ENCODE measurements at regions of chr14 and their contacts with region 1.

Region 1: DNA sequence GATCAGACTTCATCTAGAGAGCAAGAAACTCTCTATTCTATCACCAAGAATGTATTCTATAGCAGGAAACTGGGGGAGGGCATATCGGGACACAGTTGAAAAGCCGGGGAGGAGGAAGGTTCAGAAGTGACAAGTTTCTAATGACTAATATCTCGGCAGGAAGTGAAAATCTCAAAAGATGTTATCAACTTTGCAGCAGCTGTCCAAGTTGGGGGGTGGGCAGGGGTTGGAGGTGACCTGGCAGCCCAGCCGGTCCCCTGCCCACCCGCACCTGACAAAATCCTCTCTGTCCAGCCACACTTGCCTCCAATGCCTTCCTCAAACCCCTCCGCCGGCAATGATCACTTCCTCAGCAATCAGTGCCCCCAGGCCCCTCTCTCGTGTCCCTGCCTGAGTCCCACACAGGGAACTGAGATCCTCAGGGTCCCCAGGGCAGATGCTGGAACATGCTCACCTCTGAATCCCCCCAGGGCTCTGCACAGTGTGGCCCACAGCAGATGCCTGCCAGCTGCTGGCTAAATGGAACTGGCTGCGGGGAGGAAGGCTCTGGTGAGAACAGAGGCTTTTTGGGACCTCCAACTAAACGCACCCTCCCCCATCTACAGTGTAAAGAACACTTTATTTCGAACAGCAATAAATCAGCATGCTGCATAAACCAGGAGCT is 43.9 kb downstream of the CCDC88C start:
- DNase-seq: peak; percentile 69
- H3K4me3 Mint-ChIP-seq: peak overlapping the region; percentile 71
- H3K27ac Mint-ChIP-seq: peak overlapping the region; percentile 94
- H3K4me1 Mint-ChIP-seq: peaks cover 99% of the 10 kb centered on the region
- H3K27me3 Mint-ChIP-seq: no peaks in the 10 kb centered on the region

Region 2: DNA sequence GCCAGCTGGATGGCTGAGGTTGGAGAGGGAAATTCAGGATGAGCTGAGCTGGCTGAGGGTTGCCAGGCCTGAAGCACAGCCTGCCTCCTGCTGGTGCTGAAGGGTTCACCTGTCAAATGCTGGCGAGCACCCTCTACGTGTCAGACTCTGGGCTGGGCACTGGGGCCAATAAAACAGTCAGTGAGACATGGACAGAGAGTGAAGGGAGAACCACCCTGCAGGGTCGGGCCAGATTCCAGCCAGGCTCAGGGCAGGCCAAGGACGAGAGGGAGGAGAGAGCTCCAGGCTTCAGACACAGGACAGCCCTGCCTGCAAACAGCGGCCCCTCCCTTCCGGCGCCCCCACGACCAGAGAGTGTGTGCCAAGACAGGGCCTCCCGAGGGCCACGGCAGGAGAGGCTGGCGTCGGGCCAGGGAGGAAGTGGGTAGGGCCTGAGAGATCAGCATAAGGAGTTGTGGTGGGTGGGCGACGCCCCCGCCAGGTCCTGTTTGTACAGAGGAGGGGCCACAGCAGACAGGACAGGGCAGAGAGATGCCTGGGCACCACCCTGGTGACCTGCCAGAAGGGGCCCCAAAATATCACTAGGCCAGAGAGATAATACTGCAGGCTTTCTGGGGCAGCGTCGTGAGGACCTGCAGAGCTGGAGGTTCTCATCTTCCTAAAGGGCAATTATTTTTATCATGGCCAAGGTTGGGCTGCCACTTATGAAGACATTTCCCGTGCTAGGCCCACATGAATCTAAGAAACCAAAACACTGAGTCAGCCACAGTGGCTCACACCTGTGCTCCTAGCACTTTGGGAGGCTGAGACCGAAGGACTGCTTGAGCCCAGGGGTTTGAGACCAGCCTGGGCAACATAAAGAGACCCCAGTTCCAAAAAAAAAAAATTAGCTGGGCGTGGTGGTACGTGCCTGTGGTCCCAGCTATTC is 56.1 kb before region 1 on chr14:
- CTCF ChIA-PET with region 1: interaction called, 4 read pairs
- POLR2A ChIA-PET with region 1: interaction called, 17 read pairs
- DNase-seq: peak; percentile 86
- H3K4me3 Mint-ChIP-seq: peak overlapping the region; percentile 46
- H3K27ac Mint-ChIP-seq: peak overlapping the region; percentile 95
- H3K4me1 Mint-ChIP-seq: peaks cover 83% of the 10 kb centered on the region
- H3K27me3 Mint-ChIP-seq: no peaks in the 10 kb centered on the region

Region 3: DNA sequence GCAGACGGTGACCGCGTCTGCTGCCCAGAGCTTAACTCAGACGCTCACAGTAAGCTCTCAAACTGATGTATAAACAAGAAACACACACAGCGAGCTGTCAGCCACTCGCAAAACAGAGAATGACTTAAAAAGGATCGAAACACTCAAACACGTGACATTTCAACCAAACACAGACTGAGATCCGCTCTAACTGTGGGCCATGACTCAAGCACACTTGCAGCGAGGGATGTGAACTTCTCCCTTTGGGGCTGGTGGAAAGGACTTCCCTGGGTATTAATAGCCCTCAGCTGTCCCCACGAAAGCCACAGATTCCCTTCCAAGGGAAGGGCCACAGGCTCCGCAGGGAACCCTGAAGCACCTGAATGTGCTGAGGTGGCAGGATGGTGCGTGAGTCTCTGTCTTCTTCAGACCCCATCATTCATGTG is 14.8 kb after region 1 on chr14:
- CTCF ChIA-PET with region 1: interaction called, 3 read pairs
- POLR2A ChIA-PET with region 1: interaction called, 25 read pairs
- DNase-seq: peak; percentile 63
- H3K4me3 Mint-ChIP-seq: no peak overlapping the region
- H3K27ac Mint-ChIP-seq: peak overlapping the region; percentile 72
- H3K4me1 Mint-ChIP-seq: peaks cover 83% of the 10 kb centered on the region
- H3K27me3 Mint-ChIP-seq: no peaks in the 10 kb centered on the region

Region 4: DNA sequence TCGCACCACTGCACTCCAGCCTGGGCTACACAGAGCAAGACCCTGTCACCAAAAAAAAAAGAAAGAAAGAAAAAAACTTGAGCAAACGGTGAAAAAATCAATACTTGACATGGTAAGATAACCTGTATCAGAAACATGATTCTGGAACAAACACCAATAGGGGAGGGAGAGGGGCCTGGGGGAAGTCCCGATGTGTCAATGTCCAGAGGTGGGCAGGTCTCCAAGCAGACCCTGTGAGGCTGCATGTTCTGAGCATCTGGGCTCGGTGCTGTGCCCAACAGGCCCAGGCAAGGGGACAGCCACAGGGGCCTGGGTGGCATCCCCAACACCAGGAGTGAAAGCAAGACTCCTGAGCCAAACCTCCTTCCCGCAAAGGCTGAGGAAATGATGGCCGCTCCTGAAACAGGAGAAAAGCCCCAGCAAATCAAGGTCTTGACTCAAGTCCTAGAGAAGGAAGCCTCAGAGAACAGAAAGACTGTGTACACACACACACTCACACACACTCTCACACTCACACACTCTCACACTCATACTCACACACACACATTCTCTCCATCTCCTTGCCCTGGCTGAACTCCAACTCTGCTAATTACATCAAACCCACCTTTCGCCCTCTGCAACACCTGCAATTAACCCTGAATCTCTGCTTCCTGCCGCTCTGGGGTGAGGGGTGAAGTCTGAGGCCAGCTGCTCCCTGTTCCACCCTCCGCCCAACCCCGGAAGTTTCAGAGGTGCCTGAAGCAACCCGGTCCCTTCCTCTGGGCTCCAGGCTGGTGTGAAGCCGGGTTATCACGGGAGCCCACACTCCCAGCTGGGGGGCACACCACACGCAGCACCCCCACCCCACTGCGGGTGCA is 23.5 kb after region 1 on chr14:
- CTCF ChIA-PET with region 1: interaction called, 9 read pairs
- POLR2A ChIA-PET with region 1: interaction called, 77 read pairs
- DNase-seq: peak; percentile 81
- H3K4me3 Mint-ChIP-seq: peak overlapping the region; percentile 68
- H3K27ac Mint-ChIP-seq: peak overlapping the region; percentile 85
- H3K4me1 Mint-ChIP-seq: peaks cover 95% of the 10 kb centered on the region
- H3K27me3 Mint-ChIP-seq: no peaks in the 10 kb centered on the region

Measured in activated CD4-positive, alpha-beta memory T cell treated with anti-CD3 and anti-CD28 coated beads, Interleukin-2, amount 10 ng/mL, durations not matched to agents 7 days and 5 days (primary cell).